ENCODE measurements at regions of chr2 and their contacts with region 1.

Region 1: DNA sequence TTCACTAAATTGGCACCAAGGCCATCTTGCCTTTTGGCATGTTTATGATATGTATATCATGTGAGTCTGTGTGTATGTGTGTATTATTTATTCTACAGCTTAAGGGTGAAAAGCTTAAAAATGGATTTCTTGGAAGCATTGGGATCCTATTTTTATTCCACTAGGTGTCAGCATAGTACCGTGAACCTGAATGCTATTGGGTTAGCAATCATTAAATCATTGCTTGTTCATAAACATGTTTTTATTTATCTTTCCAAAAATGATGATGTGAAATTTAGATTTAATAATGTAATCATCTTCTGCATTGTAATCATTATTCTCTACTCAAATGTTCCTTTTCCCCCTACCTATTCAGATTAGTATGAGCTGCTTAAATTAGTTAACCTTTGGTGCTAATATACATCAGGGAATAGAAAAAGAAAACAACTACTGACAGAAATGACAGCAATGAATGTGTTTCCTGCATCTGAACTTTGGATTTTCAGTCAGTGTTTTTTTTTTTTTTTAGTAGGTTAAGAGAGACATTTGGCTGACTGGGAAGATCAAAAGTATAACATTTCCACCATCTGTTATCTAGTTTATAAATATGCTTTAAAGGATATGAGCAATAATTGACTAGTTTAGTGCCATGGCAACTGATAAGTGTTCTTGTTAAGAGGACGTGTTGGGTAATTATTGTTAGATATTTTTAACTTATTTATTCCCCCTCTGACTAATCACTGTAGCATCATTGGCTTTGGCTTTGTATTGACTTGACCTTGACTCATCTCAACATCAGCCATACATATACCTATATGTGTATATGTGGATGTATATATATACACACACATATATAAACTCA is 14.1 kb upstream of the ZSWIM2 start:
- DNase-seq: peak in 1 of 14 experiments; percentile 6
- ATAC-seq: no peak
- H3K4me3 ChIP-seq: no peak overlapping the region
- H3K4me3 Mint-ChIP-seq: no peak overlapping the region
- H3K27ac ChIP-seq: no peak overlapping the region
- H3K27ac Mint-ChIP-seq: no peak overlapping the region
- H3K4me1 ChIP-seq: no peaks in the 10 kb centered on the region
- H3K4me1 Mint-ChIP-seq: no peaks in the 10 kb centered on the region
- H3K27me3 ChIP-seq: no peaks in the 10 kb centered on the region
- H3K27me3 Mint-ChIP-seq: peaks cover 6% of the 10 kb centered on the region
- CTCF ChIP-seq: no peak

Region 2: DNA sequence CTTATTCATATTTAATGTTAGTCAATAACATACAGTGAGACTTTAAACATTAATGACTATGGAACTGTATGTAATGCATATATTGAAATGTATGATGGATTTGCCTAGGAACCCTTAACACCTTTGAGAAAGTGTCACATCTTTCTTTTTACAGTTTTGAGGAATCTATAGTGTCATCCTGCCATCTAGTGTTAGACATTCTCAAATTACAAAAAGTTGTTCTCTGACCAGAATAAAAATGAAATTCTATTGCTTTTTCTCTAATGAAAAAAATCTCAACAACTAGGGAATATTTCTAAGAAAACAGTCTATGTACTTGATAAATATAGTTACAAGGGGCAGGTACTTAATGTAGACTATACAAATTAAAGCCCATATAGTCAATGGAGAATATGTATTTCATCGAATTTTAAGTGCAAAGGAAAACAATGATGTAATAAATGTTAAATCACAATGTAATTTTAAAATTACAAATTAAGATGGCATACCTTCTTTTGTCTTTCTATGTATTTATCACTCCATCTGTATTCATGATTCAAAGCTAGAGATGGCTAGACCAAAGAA is 590.1 kb after region 1 on chr2:
- CTCF ChIA-PET with region 1: no interaction called
- POLR2A ChIA-PET with region 1: no interaction called
- intact Hi-C with region 1: loop called (anchors 2 to 5 kb)
- DNase-seq: peak in 2 of 14 experiments; percentile 9 to 25
- ATAC-seq: no peak
- H3K4me3 ChIP-seq: no peak overlapping the region
- H3K4me3 Mint-ChIP-seq: no peak overlapping the region
- H3K27ac ChIP-seq: no peak overlapping the region
- H3K27ac Mint-ChIP-seq: no peak overlapping the region
- H3K4me1 ChIP-seq: no peaks in the 10 kb centered on the region
- H3K4me1 Mint-ChIP-seq: peaks cover 4% of the 10 kb centered on the region
- H3K27me3 ChIP-seq: no peaks in the 10 kb centered on the region
- H3K27me3 Mint-ChIP-seq: no peaks in the 10 kb centered on the region
- CTCF ChIP-seq: no peak

Region 3: DNA sequence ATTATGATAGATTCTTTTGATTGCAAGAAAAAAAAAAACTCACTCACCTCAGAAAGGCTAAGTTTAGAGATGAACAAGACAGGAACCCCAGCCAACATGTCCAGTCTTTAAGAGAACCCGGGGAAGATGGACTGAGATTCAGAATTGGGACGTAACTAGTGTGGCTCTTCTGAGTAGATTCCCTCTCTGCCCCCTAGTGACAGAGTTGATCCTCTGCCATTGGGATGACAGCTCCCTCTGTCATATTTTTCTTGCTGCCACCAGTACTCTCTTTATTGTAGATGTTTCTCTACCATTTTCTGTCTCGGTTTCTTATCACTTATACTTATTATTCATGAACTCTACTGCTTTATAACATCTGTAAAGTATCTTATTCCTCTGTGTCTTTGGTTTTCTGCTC is 1506.3 kb after region 1 on chr2:
- CTCF ChIA-PET with region 1: no interaction called
- POLR2A ChIA-PET with region 1: no interaction called
- intact Hi-C with region 1: loop called in 1 of 2 experiments (anchors 5 kb)
- DNase-seq: peak in 2 of 14 experiments; percentile 2 to 13
- ATAC-seq: no peak
- H3K4me3 ChIP-seq: no peak overlapping the region
- H3K4me3 Mint-ChIP-seq: no peak overlapping the region
- H3K27ac ChIP-seq: no peak overlapping the region
- H3K27ac Mint-ChIP-seq: no peak overlapping the region
- H3K4me1 ChIP-seq: no peaks in the 10 kb centered on the region
- H3K4me1 Mint-ChIP-seq: no peaks in the 10 kb centered on the region
- H3K27me3 ChIP-seq: no peaks in the 10 kb centered on the region
- H3K27me3 Mint-ChIP-seq: no peaks in the 10 kb centered on the region
- CTCF ChIP-seq: no peak